ENCODE measurements at regions of chr2 and their contacts with region 1.

Region 1: GRCh38 chr2:38665854-38666555 is at the start of gene GALM:
- DNase-seq: peak; percentile 88
- H3K4me3 Mint-ChIP-seq: peak within 1 kb of the TSS; percentile 97
- H3K27ac Mint-ChIP-seq: peak within 1 kb of the TSS; percentile 99
- H3K4me1 Mint-ChIP-seq: peaks cover 57% of the 10 kb centered on the region
- H3K27me3 Mint-ChIP-seq: no peaks in the 10 kb centered on the region
- total RNA-seq, gene GALM: 56.0 and 57.4 TPM in 2 replicates

Region 2: DNA sequence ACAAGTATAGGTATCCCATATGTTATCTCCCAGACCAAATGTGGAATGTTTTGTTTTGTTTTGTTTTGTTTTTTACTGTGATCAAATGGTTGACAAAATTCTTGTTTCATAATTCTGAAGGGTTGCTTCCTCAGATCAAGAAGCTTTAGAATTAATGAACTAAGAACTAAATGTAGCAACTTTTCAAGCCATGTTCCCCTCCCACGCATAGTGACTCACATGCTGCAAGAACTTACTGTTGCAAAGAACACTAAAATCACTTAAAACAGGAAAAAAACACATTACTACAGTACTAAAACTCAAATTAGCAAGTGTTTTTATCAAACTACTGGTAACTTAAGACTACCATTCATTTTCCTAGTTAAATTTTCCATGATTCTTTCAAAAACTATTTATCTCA is 93.8 kb before region 1 on chr2:
- intact Hi-C with region 1: no loop called
- DNase-seq: no peak
- H3K4me3 Mint-ChIP-seq: peak overlapping the region; percentile 37
- H3K27ac Mint-ChIP-seq: peak overlapping the region; percentile 61
- H3K4me1 Mint-ChIP-seq: peaks cover 26% of the 10 kb centered on the region
- H3K27me3 Mint-ChIP-seq: no peaks in the 10 kb centered on the region

Region 3: DNA sequence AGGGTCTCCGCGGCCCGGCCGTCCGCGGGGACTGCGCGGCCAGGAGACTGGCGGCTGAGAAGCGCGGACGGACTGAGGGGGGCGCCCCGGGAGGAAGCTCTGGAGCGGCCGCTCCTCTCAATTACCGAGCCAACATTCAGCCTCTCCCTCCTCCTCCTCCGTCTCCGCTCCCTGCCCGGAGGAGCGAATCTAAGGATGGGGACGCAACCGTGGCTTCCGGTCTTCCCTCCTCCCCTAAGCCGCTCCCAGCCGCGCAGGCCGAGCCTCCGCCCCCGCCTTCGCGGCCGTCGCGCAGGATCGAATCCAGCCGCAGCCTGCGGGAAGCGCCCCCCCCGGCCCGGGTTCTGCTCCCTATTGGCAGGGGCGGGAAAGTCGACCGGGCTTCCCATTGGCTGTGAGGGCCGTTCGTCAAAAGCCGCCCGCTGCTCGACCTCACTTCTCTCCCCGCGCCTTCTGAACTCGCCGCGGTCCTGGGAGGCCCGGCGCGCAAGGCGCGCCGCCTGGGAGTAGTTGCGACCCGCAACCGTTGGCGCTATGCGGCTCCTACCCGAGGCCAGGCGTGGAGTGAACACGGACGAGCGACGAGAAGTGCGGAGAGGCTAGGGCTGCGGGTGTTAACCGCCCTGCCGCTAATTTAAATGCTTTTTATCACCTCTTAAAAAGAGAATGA is 63.1 kb before region 1 on chr2 and contains the start of gene HNRNPLL:
- intact Hi-C with region 1: loop called (anchors 1 kb)
- DNase-seq: peak; percentile 99
- H3K4me3 Mint-ChIP-seq: peak within 1 kb of the TSS; percentile 97
- H3K27ac Mint-ChIP-seq: peak within 1 kb of the TSS; percentile 94
- H3K4me1 Mint-ChIP-seq: peaks cover 45% of the 10 kb centered on the region
- H3K27me3 Mint-ChIP-seq: no peaks in the 10 kb centered on the region
- total RNA-seq, gene HNRNPLL: 75.8 and 80.3 TPM in 2 replicates

Region 4: GRCh38 chr2:38653715-38654527 is 12.1 kb before region 1 on chr2:
- intact Hi-C with region 1: loop called (anchors 1 kb)
- DNase-seq: peak; percentile 82
- H3K4me3 Mint-ChIP-seq: peak overlapping the region; percentile 63
- H3K27ac Mint-ChIP-seq: peak overlapping the region; percentile 87
- H3K4me1 Mint-ChIP-seq: peaks cover 58% of the 10 kb centered on the region
- H3K27me3 Mint-ChIP-seq: no peaks in the 10 kb centered on the region

Region 5: DNA sequence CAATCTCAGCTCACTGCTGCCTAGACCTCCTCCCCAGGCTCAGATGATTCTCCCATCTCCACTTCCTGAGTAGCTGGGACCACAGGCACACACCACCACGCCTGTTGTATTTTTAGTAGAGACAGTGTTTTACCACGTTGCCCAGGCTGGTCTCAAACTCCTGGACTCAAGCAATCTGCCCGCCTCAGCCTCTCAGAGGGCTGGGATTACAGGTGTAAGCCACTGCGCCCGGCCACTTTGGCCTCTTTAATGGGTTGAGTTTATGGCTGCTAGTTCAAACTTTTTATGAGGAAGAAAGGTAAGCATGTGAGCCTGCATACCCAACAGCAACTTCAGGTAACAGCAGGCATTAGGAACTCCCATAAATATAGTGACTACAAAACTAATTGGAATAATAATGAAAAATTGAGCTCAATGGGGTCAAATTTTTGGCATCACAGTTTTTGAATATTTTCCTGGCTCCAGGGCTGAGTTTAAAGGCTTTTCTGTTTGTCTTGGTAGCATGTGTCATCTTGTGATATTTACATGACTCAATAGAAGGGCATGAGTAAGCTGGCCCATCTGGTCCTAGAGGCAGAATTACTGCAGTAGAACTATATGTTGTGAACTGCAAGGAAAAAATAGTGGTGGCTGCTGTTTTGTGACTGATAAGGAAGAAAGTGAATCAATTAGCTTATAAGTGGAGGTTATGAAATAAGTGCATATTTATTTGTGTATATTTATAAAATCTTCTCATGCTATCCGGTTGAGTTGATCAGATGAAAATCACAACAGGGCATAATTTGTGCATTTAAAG is 24.7 kb after region 1 on chr2:
- intact Hi-C with region 1: loop called (anchors 1 kb)
- DNase-seq: no peak
- H3K4me3 Mint-ChIP-seq: no peak overlapping the region
- H3K27ac Mint-ChIP-seq: peak overlapping the region; percentile 86
- H3K4me1 Mint-ChIP-seq: peaks cover 46% of the 10 kb centered on the region
- H3K27me3 Mint-ChIP-seq: no peaks in the 10 kb centered on the region

Region 6: DNA sequence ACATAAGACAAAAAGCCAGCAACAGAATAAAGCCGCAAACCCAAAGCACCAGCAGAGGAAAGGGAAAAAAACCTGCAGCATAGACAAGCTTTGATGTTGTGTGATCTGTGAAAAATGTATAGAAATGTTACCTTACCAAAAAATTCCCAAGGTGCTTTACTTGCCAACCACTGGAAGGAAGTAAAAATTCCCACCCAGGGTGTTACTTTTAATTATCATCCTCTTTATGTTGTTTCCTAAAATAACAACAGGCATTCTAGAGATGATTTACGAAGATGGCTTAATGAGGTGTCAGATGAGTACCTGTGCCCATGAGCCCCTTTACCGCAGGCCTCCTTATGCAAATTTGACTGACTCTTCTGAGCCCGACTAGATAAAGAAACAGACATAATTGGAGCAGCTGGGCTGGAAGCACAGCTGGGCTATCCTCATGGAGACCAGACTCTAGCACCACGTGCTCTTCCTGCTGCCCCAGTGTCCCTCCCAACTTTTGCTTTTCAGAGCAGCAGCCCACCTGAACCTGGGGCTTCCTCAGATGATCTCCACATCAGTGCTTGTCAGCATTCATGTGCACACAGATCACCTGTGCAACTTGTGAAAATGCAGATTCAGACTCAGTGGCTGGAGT is 43.7 kb after region 1 on chr2:
- intact Hi-C with region 1: loop called (anchors 1 kb)
- DNase-seq: peak; percentile 82
- H3K4me3 Mint-ChIP-seq: peak overlapping the region; percentile 72
- H3K27ac Mint-ChIP-seq: peak overlapping the region; percentile 86
- H3K4me1 Mint-ChIP-seq: peaks cover 67% of the 10 kb centered on the region
- H3K27me3 Mint-ChIP-seq: no peaks in the 10 kb centered on the region

Region 7: GRCh38 chr2:38797276-38797675 is 131.3 kb after region 1 on chr2:
- intact Hi-C with region 1: no loop called
- DNase-seq: no peak
- H3K4me3 Mint-ChIP-seq: no peak overlapping the region
- H3K27ac Mint-ChIP-seq: no peak overlapping the region
- H3K4me1 Mint-ChIP-seq: no peaks in the 10 kb centered on the region
- H3K27me3 Mint-ChIP-seq: no peaks in the 10 kb centered on the region